Endothelial cell of umbilical vein (primary cell): ENCODE measurements at regions of chr1 and their contacts with region 1.

Region 1: GRCh38 chr1:27671964-27672749 is at the start of gene IFI6:
- DNase-seq: peak; percentile 98
- H3K4me3 ChIP-seq: peak within 1 kb of the TSS; percentile 18 to 74 (median 28)
- H3K27ac ChIP-seq: peak within 1 kb of the TSS; percentile 53
- H3K4me1 ChIP-seq: peaks cover 20% of the 10 kb centered on the region
- H3K27me3 ChIP-seq: no peaks in the 10 kb centered on the region
- CTCF ChIP-seq: peak; percentile 34 to 43
- POLR2A ChIP-seq: peak; percentile 88
- total RNA-seq, gene IFI6: 20.0 and 28.4 TPM in 2 replicates

Region 2: DNA sequence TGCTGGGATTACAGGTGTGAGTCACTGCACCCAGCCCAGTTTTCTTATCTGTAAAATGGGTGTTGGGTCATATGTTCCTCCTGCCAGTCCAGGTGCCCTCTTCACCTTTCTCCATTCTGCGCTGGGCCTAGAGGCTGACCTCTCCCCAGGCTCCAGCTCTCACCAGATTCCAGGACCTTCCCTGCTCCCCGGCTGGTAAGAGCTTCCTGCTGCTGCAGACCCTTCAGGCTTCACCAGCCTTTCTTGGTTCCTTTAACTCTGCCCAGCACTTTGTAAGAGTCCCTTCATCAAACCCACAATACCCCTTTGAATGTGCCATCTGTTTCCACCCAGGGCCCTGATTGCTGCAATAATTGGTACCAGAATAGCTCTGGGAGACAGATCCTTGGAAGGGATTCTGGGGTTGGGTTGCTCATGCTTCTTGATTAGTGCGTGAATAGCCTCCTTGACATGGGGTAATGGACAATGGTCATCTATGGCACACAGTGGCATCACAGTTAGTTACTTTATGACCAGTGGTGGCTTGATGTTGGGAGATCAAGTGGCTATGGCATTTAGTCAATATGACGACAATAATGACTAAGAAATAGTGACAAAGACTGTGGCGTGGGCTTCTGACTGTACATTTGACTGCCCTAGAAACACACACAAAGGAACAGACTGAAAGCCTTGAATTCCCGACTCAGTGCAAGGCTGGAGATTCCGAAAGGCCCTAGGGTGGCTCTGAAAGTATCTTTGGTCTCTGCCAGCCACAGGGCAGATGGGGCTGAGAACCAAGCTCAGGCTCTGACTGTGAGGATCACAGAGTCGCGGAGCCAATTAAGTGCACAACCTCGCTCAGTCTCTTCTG is 584.6 kb before region 1 on chr1:
- CTCF ChIA-PET with region 1: no interaction called
- POLR2A ChIA-PET with region 1: no interaction called
- dilution Hi-C with region 1: no loop called
- intact Hi-C with region 1: no loop called
- DNase-seq: no peak
- H3K4me3 ChIP-seq: no peak overlapping the region
- H3K27ac ChIP-seq: no peak overlapping the region
- H3K4me1 ChIP-seq: no peaks in the 10 kb centered on the region
- H3K27me3 ChIP-seq: peaks cover 0 to 3% of the 10 kb centered on the region in 2 experiments
- CTCF ChIP-seq: no peak
- POLR2A ChIP-seq: no peak

Region 3: GRCh38 chr1:27176323-27176722 is 495.8 kb before region 1 on chr1:
- CTCF ChIA-PET with region 1: no interaction called
- POLR2A ChIA-PET with region 1: no interaction called
- dilution Hi-C with region 1: no loop called
- intact Hi-C with region 1: no loop called
- DNase-seq: no peak
- H3K4me3 ChIP-seq: no peak overlapping the region
- H3K27ac ChIP-seq: no peak overlapping the region
- H3K4me1 ChIP-seq: no peaks in the 10 kb centered on the region
- H3K27me3 ChIP-seq: no peaks in the 10 kb centered on the region
- CTCF ChIP-seq: no peak
- POLR2A ChIP-seq: no peak

Region 4: GRCh38 chr1:27650539-27651175 is 21.5 kb before region 1 on chr1:
- CTCF ChIA-PET with region 1: interaction called, 10 read pairs
- POLR2A ChIA-PET with region 1: no interaction called
- dilution Hi-C with region 1: no loop called
- intact Hi-C with region 1: no loop called
- DNase-seq: peak; percentile 31
- H3K4me3 ChIP-seq: no peak overlapping the region
- H3K27ac ChIP-seq: no peak overlapping the region
- H3K4me1 ChIP-seq: no peaks in the 10 kb centered on the region
- H3K27me3 ChIP-seq: no peaks in the 10 kb centered on the region
- CTCF ChIP-seq: no peak
- POLR2A ChIP-seq: no peak

Region 5: DNA sequence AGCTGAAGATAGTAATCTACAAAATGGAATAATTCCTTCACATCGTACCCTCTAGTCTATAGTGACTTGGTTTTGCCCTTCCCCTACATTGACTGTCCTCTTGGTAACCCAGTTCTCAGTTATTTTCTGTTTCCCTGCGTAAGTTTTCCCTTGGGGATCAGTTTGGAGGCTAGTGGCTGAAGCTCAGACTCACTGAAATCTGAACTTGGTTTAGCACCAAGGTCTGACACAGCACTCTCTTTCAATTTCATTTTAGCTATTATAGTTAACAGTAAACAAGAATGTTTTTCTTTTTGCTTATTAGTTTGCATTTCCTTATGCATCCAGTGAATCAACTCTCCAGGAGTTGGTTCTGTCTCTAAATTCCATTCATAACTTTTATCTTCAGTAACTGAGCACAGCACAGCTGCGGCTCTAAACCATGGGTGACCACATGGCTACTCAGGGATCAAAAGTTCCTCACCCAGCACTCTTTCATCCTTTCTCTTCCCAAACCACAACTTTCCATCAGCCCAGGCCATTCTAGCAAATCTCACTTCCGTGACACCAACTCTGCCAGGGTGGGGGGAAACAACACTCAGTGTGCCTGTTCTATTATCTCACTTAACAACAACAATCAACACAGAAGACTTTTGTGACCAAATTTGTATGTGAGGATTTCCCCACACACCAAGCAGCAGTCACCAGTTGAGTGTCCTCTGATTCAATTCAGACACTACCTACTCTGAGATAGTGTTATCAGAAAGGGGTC is 17.4 kb after region 1 on chr1:
- CTCF ChIA-PET with region 1: interaction called, 16 read pairs
- POLR2A ChIA-PET with region 1: no interaction called
- dilution Hi-C with region 1: no loop called
- intact Hi-C with region 1: no loop called
- DNase-seq: no peak
- H3K4me3 ChIP-seq: no peak overlapping the region
- H3K27ac ChIP-seq: no peak overlapping the region
- H3K4me1 ChIP-seq: no peaks in the 10 kb centered on the region
- H3K27me3 ChIP-seq: peaks cover 18 to 32% of the 10 kb centered on the region in 2 experiments
- CTCF ChIP-seq: no peak
- POLR2A ChIP-seq: no peak

Region 6: GRCh38 chr1:27719286-27720251 is 47.4 kb after region 1 on chr1:
- CTCF ChIA-PET with region 1: interaction called, 51 read pairs
- POLR2A ChIA-PET with region 1: no interaction called
- dilution Hi-C with region 1: no loop called
- intact Hi-C with region 1: no loop called
- DNase-seq: peak; percentile 16
- H3K4me3 ChIP-seq: no peak overlapping the region
- H3K27ac ChIP-seq: no peak overlapping the region
- H3K4me1 ChIP-seq: no peaks in the 10 kb centered on the region
- H3K27me3 ChIP-seq: peaks cover 8% of the 10 kb centered on the region in 2 experiments
- CTCF ChIP-seq: peak in 1 of 2 donors; percentile 20
- POLR2A ChIP-seq: no peak

Region 7: DNA sequence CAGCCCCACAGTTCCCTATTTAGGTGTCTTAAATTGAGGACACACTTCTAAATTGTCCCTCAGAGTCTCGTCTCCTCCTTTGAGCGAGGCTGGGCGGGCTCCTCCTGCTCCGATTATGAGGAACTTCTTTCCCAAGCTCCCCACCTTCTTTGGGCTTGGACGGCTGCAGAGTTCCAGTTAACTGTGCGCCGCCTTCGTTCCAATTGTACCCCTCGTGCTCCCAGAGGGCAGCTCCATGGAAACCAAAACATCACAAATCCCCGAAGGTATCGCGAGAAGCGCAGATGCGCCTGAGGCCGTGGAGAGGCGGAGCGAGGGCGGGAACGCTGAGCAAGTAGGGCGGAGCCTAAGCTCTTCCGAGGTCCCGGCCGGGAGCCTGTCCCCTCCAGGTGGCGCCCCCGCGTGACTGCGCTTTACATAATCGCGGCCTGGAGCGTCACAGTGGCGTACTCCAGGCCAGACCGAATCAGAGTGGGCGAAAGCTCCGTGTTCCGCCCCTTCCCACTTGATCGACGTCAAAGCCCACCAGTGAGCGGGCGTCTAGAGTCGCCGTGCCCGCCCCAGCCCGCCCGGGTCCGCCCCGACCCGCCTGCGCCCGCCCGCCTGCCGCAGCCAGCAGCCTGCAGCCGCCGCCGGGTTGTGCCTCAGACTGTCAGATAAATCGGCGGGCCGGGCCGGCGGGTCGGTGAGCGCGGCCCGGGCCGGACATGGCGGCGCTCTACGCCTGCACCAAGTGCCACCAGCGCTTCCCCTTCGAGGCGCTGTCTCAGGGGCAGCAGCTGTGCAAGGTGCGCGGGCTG is 53.4 kb after region 1 on chr1 and contains the start of gene FAM76A:
- CTCF ChIA-PET with region 1: interaction called, 51 read pairs
- POLR2A ChIA-PET with region 1: interaction called, 8 read pairs
- dilution Hi-C with region 1: no loop called
- intact Hi-C with region 1: loop called (anchors 1 kb)
- DNase-seq: peak; percentile 100
- H3K4me3 ChIP-seq: peak within 1 kb of the TSS; percentile 86 to 97 (median 92)
- H3K27ac ChIP-seq: peak within 1 kb of the TSS; percentile 73
- H3K4me1 ChIP-seq: peaks cover 13% of the 10 kb centered on the region
- H3K27me3 ChIP-seq: no peaks in the 10 kb centered on the region
- CTCF ChIP-seq: peak; percentile 48 to 70
- POLR2A ChIP-seq: peak; percentile 49
- total RNA-seq, gene FAM76A: 11.9 and 12.8 TPM in 2 replicates

Region 8: DNA sequence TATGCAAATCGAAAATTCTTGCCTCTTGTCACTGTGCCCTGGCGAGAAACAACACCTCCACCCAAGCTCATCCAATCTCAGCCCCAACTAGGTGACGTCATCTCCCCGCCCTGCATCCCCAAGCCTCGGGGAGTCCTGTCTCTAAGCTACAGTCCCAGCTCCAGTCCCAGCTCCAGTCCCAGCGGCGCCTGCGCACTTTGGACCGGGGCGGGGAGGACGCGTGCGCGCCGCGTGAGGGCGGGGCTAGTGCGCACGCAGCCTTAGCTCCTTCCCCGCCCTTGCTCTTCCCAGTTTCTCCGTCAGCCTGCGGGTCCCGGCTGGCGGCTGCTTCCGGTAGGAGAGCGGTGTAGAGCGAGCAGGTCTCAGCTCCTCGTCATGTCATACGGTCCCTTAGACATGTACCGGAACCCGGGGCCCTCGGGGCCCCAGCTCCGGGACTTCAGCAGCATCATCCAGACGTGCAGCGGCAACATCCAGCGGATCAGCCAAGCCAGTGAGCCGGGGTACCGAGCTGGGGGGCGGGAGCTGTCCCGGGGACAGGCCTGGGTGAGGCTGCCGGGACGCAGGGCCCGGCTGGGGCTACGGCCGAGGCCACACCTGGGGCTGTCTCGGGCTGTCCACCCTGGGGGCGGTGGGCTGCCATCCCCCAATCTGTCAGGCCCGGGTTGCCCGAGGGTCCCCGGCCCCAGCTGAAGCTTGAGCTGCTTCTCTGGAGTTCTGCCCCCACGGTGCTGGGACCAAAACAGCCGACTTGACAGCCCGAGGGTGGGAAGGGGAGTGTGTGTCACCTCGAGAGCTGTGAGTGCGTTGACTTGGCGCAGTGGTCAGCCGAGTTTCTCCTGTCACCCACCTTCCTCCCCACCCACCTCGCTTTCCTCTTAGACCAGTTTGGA is 101.0 kb after region 1 on chr1 and contains the start of gene STX12:
- CTCF ChIA-PET with region 1: interaction called, 12 read pairs
- POLR2A ChIA-PET with region 1: interaction called, 8 read pairs
- dilution Hi-C with region 1: no loop called
- intact Hi-C with region 1: loop called (anchors 1 kb)
- DNase-seq: peak; percentile 100
- H3K4me3 ChIP-seq: peak within 1 kb of the TSS; percentile 63 to 99 (median 90)
- H3K27ac ChIP-seq: peak within 1 kb of the TSS; percentile 82
- H3K4me1 ChIP-seq: peaks cover 23% of the 10 kb centered on the region
- H3K27me3 ChIP-seq: no peaks in the 10 kb centered on the region
- CTCF ChIP-seq: no peak
- POLR2A ChIP-seq: peak; percentile 88
- total RNA-seq, gene STX12: 83.8 and 90.3 TPM in 2 replicates

Region 9: DNA sequence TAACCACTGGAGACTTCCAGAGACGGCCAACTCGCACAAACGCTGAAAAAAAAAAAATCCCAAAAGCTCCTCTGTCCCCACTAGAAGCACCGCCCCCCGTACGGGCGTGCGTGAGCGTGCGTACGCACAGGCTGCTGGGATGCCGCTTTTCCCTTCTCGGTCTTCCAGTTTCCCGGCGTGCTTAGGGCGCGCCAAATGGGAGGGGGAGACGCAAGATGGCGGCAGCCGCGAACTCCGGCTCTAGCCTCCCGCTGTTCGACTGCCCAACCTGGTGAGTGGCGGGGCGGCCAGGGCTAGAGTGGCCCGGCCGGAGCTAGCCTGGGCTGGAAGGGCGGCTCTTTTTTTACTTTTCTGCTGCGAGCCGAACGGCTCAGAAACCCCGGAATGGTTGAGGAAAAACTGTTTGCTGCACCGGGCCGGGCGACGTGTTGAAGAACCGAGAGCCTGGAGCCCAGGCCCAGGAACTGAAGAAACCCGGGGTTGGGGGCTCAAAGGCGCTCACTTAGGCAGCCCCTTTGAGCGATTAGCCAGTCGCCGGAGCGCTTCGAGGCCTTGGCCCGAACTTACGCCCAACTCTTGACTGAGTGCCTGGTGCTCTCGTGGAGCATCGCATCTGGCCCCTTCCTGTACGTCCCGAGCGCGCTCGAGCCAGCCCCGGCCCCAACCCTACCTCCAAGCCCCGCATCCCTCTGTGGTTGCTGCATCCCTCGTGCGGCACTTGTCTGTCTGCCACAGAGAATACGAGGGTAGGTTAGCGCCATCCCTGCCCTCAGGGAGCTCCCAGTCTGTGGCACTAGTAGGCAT is 158.7 kb after region 1 on chr1 and contains the start of gene PPP1R8:
- CTCF ChIA-PET with region 1: interaction called, 5 read pairs
- POLR2A ChIA-PET with region 1: no interaction called
- dilution Hi-C with region 1: no loop called
- intact Hi-C with region 1: loop called (anchors 2 kb)
- DNase-seq: peak; percentile 96
- H3K4me3 ChIP-seq: peak within 1 kb of the TSS; percentile 90 to 93 (median 92)
- H3K27ac ChIP-seq: peak within 1 kb of the TSS; percentile 86
- H3K4me1 ChIP-seq: peaks cover 19% of the 10 kb centered on the region
- H3K27me3 ChIP-seq: no peaks in the 10 kb centered on the region
- CTCF ChIP-seq: no peak
- POLR2A ChIP-seq: peak; percentile 97
- total RNA-seq, gene PPP1R8: 45.4 and 48.5 TPM in 2 replicates